PC-3 (cell line): ENCODE measurements at regions of chrX and their contacts with region 1.

Region 1: GRCh38 chrX:132609394-132609793 is 120.6 kb upstream of the MBNL3 start:
- DNase-seq: no peak
- ATAC-seq: no peak
- H3K4me3 ChIP-seq: no peak overlapping the region
- H3K27ac ChIP-seq: no peak overlapping the region
- H3K4me1 ChIP-seq: no peaks in the 10 kb centered on the region
- H3K27me3 ChIP-seq: no peaks in the 10 kb centered on the region
- CTCF ChIP-seq: no peak

Region 2: GRCh38 chrX:132532097-132532496 is 77.3 kb before region 1 on chrX:
- CTCF ChIA-PET with region 1: interaction called, 15 read pairs
- POLR2A ChIA-PET with region 1: no interaction called
- intact Hi-C with region 1: no loop called
- DNase-seq: no peak
- ATAC-seq: no peak
- H3K4me3 ChIP-seq: no peak overlapping the region
- H3K27ac ChIP-seq: no peak overlapping the region
- H3K4me1 ChIP-seq: peaks cover 14% of the 10 kb centered on the region
- H3K27me3 ChIP-seq: no peaks in the 10 kb centered on the region
- CTCF ChIP-seq: no peak

Region 3: DNA sequence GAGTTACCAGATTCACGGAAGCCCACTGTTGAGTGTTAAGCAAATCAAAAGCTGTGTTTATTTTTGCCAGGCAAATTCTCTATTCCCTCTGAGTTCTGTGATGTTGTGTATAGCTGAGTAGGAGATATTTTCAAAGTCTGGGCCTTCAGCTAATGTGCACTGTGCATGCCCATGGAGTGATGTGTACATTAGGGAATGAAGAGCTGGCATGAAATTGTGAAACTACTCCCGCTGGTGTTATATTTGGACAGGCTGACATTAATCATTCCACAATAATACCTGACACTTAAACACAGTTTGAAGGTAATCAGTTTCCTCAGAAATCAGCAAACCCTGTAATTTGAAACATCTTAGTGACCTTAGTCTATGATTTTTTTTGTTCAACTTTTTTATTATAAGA is 32.5 kb before region 1 on chrX:
- CTCF ChIA-PET with region 1: no interaction called
- POLR2A ChIA-PET with region 1: no interaction called
- intact Hi-C with region 1: no loop called
- DNase-seq: no peak
- ATAC-seq: no peak
- H3K4me3 ChIP-seq: no peak overlapping the region
- H3K27ac ChIP-seq: no peak overlapping the region
- H3K4me1 ChIP-seq: no peaks in the 10 kb centered on the region
- H3K27me3 ChIP-seq: no peaks in the 10 kb centered on the region
- CTCF ChIP-seq: no peak